ENCODE measurements at regions of chr17 and their contacts with region 1.

Region 1: GRCh38 chr17:80426681-80427326 is 11.8 kb downstream of the ENDOV start:
- DNase-seq: peak; percentile 68 to 79 (median 75)
- ATAC-seq: peak; percentile 80 to 94 (median 90)
- H3K4me3 ChIP-seq: no peak overlapping the region
- H3K27ac ChIP-seq: no peak overlapping the region
- H3K4me1 ChIP-seq: no peaks in the 10 kb centered on the region
- H3K27me3 ChIP-seq: no peaks in the 10 kb centered on the region
- CTCF ChIP-seq: peak; percentile 96 to 99 (median 98)
- POLR2A ChIP-seq: no peak

Region 2: DNA sequence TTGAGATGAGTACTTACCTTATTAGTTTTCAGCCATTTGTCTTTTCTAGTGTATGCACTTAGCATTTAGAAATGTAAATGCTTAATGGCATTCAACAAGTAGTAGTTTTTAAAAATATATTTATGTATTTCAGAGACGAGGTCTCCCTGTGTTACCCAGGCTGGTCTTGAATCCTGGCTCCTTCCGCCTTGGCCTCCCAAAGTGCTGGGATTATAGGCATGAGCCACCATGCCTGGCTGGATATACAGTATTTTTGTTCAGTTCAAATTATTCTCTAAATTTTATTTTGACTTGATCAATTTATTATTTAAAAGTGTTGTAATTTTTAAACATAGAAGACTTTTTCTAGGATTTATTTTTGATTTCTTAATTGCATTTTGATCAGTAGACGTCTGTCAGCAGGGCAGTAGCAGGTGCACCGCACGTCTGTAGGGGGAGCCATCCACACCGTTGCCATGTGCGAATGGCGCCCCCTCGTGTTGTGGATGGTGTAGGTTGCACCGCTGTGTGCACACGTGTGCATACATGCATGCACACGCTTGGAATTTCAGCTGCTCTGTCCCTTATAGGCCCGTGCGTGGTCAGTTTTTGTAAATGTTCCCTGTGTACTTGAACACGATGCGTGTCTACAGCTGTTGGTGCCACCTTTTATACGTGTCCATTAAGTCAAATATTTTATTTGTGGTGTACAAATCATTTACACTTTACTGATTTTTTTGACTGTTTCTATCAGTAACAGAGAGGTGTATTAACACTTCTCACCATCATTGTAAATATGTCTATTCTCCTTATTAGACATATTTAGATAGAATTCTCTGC is 148.5 kb after region 1 on chr17:
- intact Hi-C with region 1: loop called in 1 of 2 experiments (anchors 10 kb)
- DNase-seq: peak; percentile 75 to 84 (median 84)
- ATAC-seq: peak; percentile 99 to 100 (median 100)
- H3K4me3 ChIP-seq: no peak overlapping the region
- H3K27ac ChIP-seq: no peak overlapping the region
- H3K4me1 ChIP-seq: no peaks in the 10 kb centered on the region
- H3K27me3 ChIP-seq: no peaks in the 10 kb centered on the region
- CTCF ChIP-seq: peak; percentile 92 to 99 (median 99)
- POLR2A ChIP-seq: no peak

Region 3: DNA sequence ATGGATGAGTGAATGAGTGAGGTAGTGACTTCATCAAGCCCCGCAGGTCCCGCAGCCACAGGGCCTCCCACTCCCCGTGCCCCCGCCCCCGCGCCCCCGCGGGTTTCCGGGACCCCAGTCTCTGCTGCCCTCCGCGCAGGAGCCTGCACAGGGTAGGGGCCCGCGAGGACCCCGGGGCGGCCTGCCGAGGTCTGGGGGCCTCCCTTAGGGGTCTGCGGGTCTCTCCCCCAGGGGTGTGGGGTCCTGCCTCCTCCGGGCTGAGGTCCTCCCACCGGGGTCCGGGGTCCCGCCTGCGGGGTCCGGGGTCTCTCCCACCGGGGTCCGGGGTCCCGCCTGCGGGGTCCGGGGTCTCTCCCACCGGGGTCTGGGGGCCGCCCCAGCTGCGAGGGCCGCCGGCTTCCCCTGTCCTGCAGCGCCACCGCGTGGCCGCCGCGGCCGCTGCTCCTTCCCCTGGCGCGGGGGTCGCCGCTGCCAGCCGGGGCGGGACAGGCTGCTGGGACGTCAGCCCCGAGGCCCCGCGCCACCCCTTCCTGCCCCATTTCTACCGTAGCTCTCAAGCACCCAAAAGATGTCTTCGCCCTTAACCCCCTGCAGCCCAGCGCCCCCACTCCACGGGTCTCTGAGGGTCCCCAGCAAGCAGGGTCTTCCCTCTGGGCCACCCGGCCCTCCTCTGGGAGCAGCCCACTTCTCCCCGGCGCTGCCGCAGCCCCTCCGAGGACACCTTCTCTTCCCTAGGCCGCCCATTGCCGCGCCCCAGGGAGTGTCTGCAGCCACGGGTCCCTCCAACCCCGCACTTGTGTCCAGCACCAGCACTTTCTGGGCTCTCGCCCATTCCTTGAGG is 554.5 kb after region 1 on chr17:
- intact Hi-C with region 1: loop called (anchors 5 kb)
- DNase-seq: no peak
- ATAC-seq: peak in 3 of 4 donors; percentile 13 to 43 (median 40)
- H3K4me3 ChIP-seq: no peak overlapping the region
- H3K27ac ChIP-seq: no peak overlapping the region
- H3K4me1 ChIP-seq: no peaks in the 10 kb centered on the region
- H3K27me3 ChIP-seq: no peaks in the 10 kb centered on the region
- CTCF ChIP-seq: peak; percentile 64 to 77 (median 74)
- POLR2A ChIP-seq: no peak

Measured in right lobe of liver (tissue), 6 donors.